CD8-positive, alpha-beta T cell (primary cell): ENCODE measurements at regions of chr10 and their contacts with region 1.

Region 1: GRCh38 chr10:126409821-126410220 is 21.5 kb upstream of the ADAM12 start:
- DNase-seq: no peak
- ATAC-seq: no peak
- H3K4me3 ChIP-seq: no peak overlapping the region
- H3K4me3 Mint-ChIP-seq: no peak overlapping the region
- H3K27ac ChIP-seq: no peak overlapping the region
- H3K27ac Mint-ChIP-seq: no peak overlapping the region
- H3K4me1 ChIP-seq: no peaks in the 10 kb centered on the region
- H3K4me1 Mint-ChIP-seq: no peaks in the 10 kb centered on the region
- H3K27me3 ChIP-seq: no peaks in the 10 kb centered on the region
- H3K27me3 Mint-ChIP-seq: no peaks in the 10 kb centered on the region
- CTCF ChIP-seq: no peak

Region 2: GRCh38 chr10:126336801-126337200 is 73.0 kb before region 1 on chr10:
- CTCF ChIA-PET with region 1: no interaction called
- POLR2A ChIA-PET with region 1: no interaction called
- intact Hi-C with region 1: no loop called
- DNase-seq: no peak
- ATAC-seq: no peak
- H3K4me3 ChIP-seq: no peak overlapping the region
- H3K4me3 Mint-ChIP-seq: no peak overlapping the region
- H3K27ac ChIP-seq: no peak overlapping the region
- H3K27ac Mint-ChIP-seq: no peak overlapping the region
- H3K4me1 ChIP-seq: no peaks in the 10 kb centered on the region
- H3K4me1 Mint-ChIP-seq: no peaks in the 10 kb centered on the region
- H3K27me3 ChIP-seq: no peaks in the 10 kb centered on the region
- H3K27me3 Mint-ChIP-seq: no peaks in the 10 kb centered on the region
- CTCF ChIP-seq: no peak

Region 3: GRCh38 chr10:126421754-126422394 is 12.1 kb after region 1 on chr10:
- CTCF ChIA-PET with region 1: no interaction called
- POLR2A ChIA-PET with region 1: no interaction called
- intact Hi-C with region 1: loop called in 1 of 2 experiments (anchors 1 kb)
- DNase-seq: no peak
- ATAC-seq: no peak
- H3K4me3 ChIP-seq: no peak overlapping the region
- H3K4me3 Mint-ChIP-seq: no peak overlapping the region
- H3K27ac ChIP-seq: no peak overlapping the region
- H3K27ac Mint-ChIP-seq: no peak overlapping the region
- H3K4me1 ChIP-seq: no peaks in the 10 kb centered on the region
- H3K4me1 Mint-ChIP-seq: no peaks in the 10 kb centered on the region
- H3K27me3 ChIP-seq: no peaks in the 10 kb centered on the region
- H3K27me3 Mint-ChIP-seq: no peaks in the 10 kb centered on the region
- CTCF ChIP-seq: no peak